ENCODE measurements at regions of chr12 and their contacts with region 1.

Region 1: DNA sequence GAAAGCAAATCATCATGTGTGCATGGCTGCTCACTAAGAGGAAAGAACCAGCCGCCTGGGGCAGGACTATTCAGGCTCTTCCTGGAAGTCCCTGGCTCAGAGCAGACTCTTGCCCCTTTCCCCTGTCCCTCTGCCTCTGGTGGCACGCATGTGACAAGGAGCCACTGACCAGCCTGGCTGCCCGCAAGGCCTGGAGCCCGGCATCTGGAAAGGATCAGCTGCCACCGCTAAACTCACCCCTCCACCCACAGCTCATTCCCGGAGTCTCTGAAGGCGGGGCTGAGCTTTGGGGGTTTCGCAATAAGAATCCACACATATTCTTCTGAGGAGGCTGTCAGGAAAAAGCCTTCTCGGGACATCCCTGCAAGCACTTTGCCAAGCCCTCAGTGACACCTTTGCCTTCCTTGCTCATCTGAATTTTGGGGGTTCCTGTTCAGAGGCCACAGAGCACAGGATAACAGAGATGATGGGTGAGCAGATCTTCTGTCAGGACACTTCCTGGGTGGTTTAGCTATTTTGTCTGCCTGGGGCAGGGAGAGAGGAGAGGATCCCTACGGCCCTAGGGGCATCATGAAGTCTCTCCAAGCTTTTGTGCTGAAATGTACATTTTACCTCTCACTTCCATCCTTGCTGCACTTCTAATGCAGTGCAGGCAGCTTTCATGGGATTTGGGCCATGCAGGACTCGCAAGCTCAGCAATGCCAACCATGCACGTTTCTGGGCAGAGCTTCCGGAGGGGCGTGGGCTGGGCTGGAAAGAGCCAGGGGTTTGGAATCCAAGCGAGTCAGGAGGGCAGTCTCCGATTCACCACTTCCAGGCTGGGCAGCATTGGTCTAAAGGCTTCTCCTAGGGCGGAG is 124.8 kb upstream of the MAP1LC3B2 start:
- DNase-seq: peak; percentile 81
- H3K4me3 Mint-ChIP-seq: no peak overlapping the region
- H3K27ac Mint-ChIP-seq: no peak overlapping the region
- H3K4me1 Mint-ChIP-seq: no peaks in the 10 kb centered on the region
- H3K27me3 Mint-ChIP-seq: peaks cover 24% of the 10 kb centered on the region
- CTCF ChIP-seq: no peak

Region 2: DNA sequence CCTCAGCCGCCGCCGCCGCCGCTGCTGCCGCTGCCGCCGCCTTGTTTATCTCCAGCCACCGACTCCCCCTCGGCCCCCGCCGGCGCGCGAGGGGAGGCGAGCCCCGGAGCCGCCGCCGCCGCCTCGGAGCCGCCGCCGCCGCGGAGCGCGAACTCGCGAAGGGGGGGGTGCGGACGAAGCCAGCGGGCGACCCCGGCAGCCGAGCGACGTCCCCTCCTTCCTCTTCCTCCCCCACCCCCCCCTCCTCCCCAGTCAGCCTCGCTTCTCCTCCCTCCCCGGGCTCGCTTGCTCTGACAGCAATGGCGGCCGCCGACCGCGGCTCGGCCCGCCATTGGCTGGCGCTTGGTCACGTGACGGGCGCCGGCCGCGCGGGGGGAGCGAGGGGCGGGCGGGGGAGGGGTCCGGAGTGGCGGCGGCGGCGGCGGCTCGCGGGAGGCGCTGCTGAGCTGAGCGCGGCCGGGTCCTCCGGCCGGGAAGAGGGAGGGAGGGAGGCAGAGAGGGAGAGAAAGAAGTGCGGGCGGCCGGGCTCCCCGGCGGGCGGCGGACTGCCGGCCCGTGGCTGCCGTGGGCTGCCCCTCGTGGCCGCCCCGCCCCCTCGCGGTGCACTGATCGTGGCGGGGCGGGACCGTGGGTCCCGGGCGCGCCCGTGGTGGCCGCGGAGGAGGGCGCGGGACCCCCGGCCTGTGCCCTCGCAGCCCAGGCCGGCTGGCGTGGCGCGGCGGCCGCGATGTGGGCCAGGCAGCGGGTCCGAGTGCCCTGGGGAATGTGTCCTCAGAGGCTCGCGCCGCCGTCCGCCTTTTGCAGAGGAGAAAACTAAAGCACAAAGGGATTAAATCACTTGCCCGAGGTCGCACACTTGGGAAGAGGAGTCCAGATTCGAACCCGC is 156.7 kb before region 1 on chr12 and contains the start of gene MED13L:
- CTCF ChIA-PET with region 1: no interaction called
- intact Hi-C with region 1: loop called (anchors 5 kb)
- DNase-seq: peak; percentile 92
- H3K4me3 Mint-ChIP-seq: peak within 1 kb of the TSS; percentile 87
- H3K27ac Mint-ChIP-seq: peak within 1 kb of the TSS; percentile 94
- H3K4me1 Mint-ChIP-seq: no peaks in the 10 kb centered on the region
- H3K27me3 Mint-ChIP-seq: peaks cover 10% of the 10 kb centered on the region
- CTCF ChIP-seq: no peak
- total RNA-seq, gene MED13L: 89.0 and 89.6 TPM in 2 replicates

Region 3: DNA sequence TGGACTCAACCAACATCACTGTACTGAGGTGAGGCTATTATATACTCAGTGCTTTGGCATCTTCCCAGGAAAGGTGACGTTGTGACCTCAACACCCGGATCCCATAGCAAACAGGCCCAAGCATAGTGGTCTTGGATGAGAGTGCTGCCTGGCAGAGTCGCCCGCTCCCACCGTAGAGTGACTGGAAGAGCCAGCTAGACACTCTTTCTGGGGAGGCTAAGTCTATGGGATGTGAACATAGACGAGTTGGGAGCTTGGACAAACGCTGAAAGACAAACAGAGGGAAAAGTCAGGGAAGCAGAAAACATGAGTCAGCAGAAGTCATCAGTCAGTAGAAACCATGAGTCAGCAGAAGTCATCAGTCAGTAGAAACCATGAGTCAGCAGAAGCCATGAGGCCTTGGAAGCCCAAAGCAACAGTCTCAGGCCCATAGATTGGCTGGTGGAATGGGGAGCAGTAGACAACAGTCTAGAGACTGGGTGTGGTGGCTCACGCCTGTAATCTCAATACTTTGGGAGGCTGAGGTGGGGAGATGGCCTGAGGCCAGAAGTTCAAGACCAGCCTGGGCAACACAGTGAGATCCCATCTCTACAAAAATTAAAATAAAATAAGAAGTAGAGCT is 58.4 kb after region 1 on chr12:
- CTCF ChIA-PET with region 1: no interaction called
- intact Hi-C with region 1: loop called (anchors 5 kb)
- DNase-seq: no peak
- H3K4me3 Mint-ChIP-seq: no peak overlapping the region
- H3K27ac Mint-ChIP-seq: no peak overlapping the region
- H3K4me1 Mint-ChIP-seq: peaks cover 21% of the 10 kb centered on the region
- H3K27me3 Mint-ChIP-seq: peaks cover 4% of the 10 kb centered on the region
- CTCF ChIP-seq: no peak

Region 4: GRCh38 chr12:116717466-116718437 is 283.4 kb after region 1 on chr12:
- CTCF ChIA-PET with region 1: no interaction called
- intact Hi-C with region 1: no loop called
- DNase-seq: no peak
- H3K4me3 Mint-ChIP-seq: no peak overlapping the region
- H3K27ac Mint-ChIP-seq: no peak overlapping the region
- H3K4me1 Mint-ChIP-seq: no peaks in the 10 kb centered on the region
- H3K27me3 Mint-ChIP-seq: no peaks in the 10 kb centered on the region
- CTCF ChIP-seq: no peak

Measured in Calu3 (cell line).